ENCODE measurements at regions of chr3 and their contacts with region 1.

Region 1: DNA sequence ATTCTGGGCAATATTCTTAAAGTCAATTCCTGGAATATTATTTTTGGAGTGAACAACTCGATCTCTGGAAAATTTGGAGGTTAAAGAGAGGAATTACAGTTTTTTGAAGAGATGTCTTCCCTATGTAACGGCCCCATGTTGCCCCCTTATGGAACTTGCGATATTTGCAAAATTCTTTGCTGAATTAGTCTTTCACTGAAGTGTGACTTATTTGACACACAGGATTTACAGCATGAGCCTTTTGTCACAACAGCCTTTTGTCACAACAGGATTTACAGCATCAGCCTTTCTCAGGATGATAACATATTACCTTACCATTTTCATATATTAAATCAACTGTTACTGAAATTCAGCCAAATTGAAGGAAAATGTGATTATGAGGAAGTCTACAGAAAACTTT is 37.8 kb upstream of the SPTSSB start:
- DNase-seq: peak in 7 of 9 donors; percentile 17 to 56 (median 55)
- ATAC-seq: peak; percentile 68
- H3K4me3 ChIP-seq: no peak overlapping the region
- H3K4me3 Mint-ChIP-seq: no peak overlapping the region
- H3K27ac ChIP-seq: no peak overlapping the region
- H3K27ac Mint-ChIP-seq: no peak overlapping the region
- H3K4me1 ChIP-seq: peaks cover 21 to 22% of the 10 kb centered on the region in 2 donors
- H3K4me1 Mint-ChIP-seq: peaks cover 8 to 34% (median 30%) of the 10 kb centered on the region in 7 donors
- H3K27me3 ChIP-seq: no peaks in the 10 kb centered on the region
- H3K27me3 Mint-ChIP-seq: peaks cover 0 to 66% (median 6%) of the 10 kb centered on the region in 5 donors

Region 2: GRCh38 chr3:160754855-160755747 is 654.0 kb before region 1 on chr3:
- CTCF ChIA-PET with region 1: no interaction called
- POLR2A ChIA-PET with region 1: no interaction called
- intact Hi-C with region 1: loop called in 1 of 2 experiments (anchors 5 kb)
- DNase-seq: peak; percentile 76 to 88 (median 85)
- ATAC-seq: peak; percentile 92
- H3K4me3 ChIP-seq: peak overlapping the region; percentile 73
- H3K4me3 Mint-ChIP-seq: peak overlapping the region; percentile 88 to 99 (median 96)
- H3K27ac ChIP-seq: peak overlapping the region; percentile 69
- H3K27ac Mint-ChIP-seq: peak overlapping the region; percentile 88 to 97 (median 94)
- H3K4me1 ChIP-seq: peaks cover 10 to 11% of the 10 kb centered on the region in 2 donors
- H3K4me1 Mint-ChIP-seq: peaks cover 27 to 36% (median 30%) of the 10 kb centered on the region in 7 donors
- H3K27me3 ChIP-seq: peaks cover 0 to 6% of the 10 kb centered on the region in 2 donors
- H3K27me3 Mint-ChIP-seq: peaks cover 5 to 41% (median 10%) of the 10 kb centered on the region in 5 donors

Region 3: GRCh38 chr3:161096771-161097355 is 312.2 kb before region 1 on chr3:
- CTCF ChIA-PET with region 1: interaction called, 3 read pairs
- POLR2A ChIA-PET with region 1: no interaction called
- intact Hi-C with region 1: loop called in 1 of 2 experiments (anchors 1 kb)
- DNase-seq: peak in 5 of 9 donors; percentile 8 to 34 (median 21)
- ATAC-seq: no peak
- H3K4me3 ChIP-seq: no peak overlapping the region
- H3K4me3 Mint-ChIP-seq: no peak overlapping the region
- H3K27ac ChIP-seq: no peak overlapping the region
- H3K27ac Mint-ChIP-seq: no peak overlapping the region
- H3K4me1 ChIP-seq: no peaks in the 10 kb centered on the region
- H3K4me1 Mint-ChIP-seq: peaks cover 0 to 2% (median 0%) of the 10 kb centered on the region in 7 donors
- H3K27me3 ChIP-seq: no peaks in the 10 kb centered on the region
- H3K27me3 Mint-ChIP-seq: peaks cover 0 to 8% (median 0%) of the 10 kb centered on the region in 5 donors

Region 4: GRCh38 chr3:161305095-161305991 is 103.7 kb before region 1 on chr3:
- CTCF ChIA-PET with region 1: interaction called, 11 read pairs
- POLR2A ChIA-PET with region 1: no interaction called
- intact Hi-C with region 1: loop called (anchors 1 kb)
- DNase-seq: peak in 5 of 9 donors; percentile 21 to 41 (median 25)
- ATAC-seq: peak; percentile 51
- H3K4me3 ChIP-seq: no peak overlapping the region
- H3K4me3 Mint-ChIP-seq: no peak overlapping the region
- H3K27ac ChIP-seq: no peak overlapping the region
- H3K27ac Mint-ChIP-seq: no peak overlapping the region
- H3K4me1 ChIP-seq: peaks cover 18 to 20% of the 10 kb centered on the region in 2 donors
- H3K4me1 Mint-ChIP-seq: peaks cover 4 to 49% (median 38%) of the 10 kb centered on the region in 7 donors
- H3K27me3 ChIP-seq: no peaks in the 10 kb centered on the region
- H3K27me3 Mint-ChIP-seq: peaks cover 0 to 70% (median 0%) of the 10 kb centered on the region in 5 donors

Region 5: GRCh38 chr3:161349529-161350278 is 59.4 kb before region 1 on chr3:
- CTCF ChIA-PET with region 1: no interaction called
- POLR2A ChIA-PET with region 1: no interaction called
- intact Hi-C with region 1: loop called in 1 of 2 experiments (anchors 2 kb)
- DNase-seq: peak in 5 of 9 donors; percentile 10 to 57 (median 23)
- ATAC-seq: peak; percentile 87
- H3K4me3 ChIP-seq: no peak overlapping the region
- H3K4me3 Mint-ChIP-seq: peak overlapping the region in 5 of 10 donors; percentile 2 to 40 (median 10)
- H3K27ac ChIP-seq: no peak overlapping the region
- H3K27ac Mint-ChIP-seq: peak overlapping the region in 5 of 9 donors; percentile 2 to 49 (median 16)
- H3K4me1 ChIP-seq: peaks cover 7 to 14% of the 10 kb centered on the region in 2 donors
- H3K4me1 Mint-ChIP-seq: peaks cover 6 to 22% (median 17%) of the 10 kb centered on the region in 7 donors
- H3K27me3 ChIP-seq: no peaks in the 10 kb centered on the region
- H3K27me3 Mint-ChIP-seq: peaks cover 0 to 55% (median 0%) of the 10 kb centered on the region in 5 donors

Region 6: DNA sequence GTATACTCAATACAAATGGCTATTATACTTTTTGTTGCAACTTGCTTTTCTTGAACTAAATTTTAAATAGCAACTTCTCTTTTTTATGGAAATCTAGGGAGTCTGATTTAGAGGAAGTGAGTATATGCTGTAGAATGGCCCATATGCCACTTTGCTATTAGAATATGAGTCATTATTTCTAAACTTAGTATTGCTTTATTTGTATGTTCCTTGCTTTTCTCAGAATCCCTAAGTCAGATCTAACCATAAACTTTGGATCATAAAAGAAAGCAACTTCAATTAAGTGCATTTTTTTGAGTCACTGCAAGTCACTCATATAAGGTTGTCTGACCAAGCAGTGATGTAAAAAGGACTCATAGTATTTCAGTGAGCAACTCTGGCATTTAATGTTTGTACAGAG is 20.2 kb before region 1 on chr3:
- CTCF ChIA-PET with region 1: no interaction called
- POLR2A ChIA-PET with region 1: no interaction called
- intact Hi-C with region 1: loop called in 1 of 2 experiments (anchors 2 kb)
- DNase-seq: no peak
- ATAC-seq: peak; percentile 67
- H3K4me3 ChIP-seq: no peak overlapping the region
- H3K4me3 Mint-ChIP-seq: no peak overlapping the region
- H3K27ac ChIP-seq: no peak overlapping the region
- H3K27ac Mint-ChIP-seq: no peak overlapping the region
- H3K4me1 ChIP-seq: peaks cover 6 to 17% of the 10 kb centered on the region in 2 donors
- H3K4me1 Mint-ChIP-seq: peaks cover 3 to 41% (median 34%) of the 10 kb centered on the region in 7 donors
- H3K27me3 ChIP-seq: peaks cover 0 to 4% of the 10 kb centered on the region in 2 donors
- H3K27me3 Mint-ChIP-seq: peaks cover 0 to 69% (median 17%) of the 10 kb centered on the region in 5 donors

Region 7: GRCh38 chr3:161423911-161424522 is 14.9 kb after region 1 on chr3:
- CTCF ChIA-PET with region 1: interaction called, 3 read pairs
- POLR2A ChIA-PET with region 1: no interaction called
- intact Hi-C with region 1: loop called in 1 of 2 experiments (anchors 1 kb)
- DNase-seq: peak in 6 of 9 donors; percentile 29 to 54 (median 48)
- ATAC-seq: peak; percentile 61
- H3K4me3 ChIP-seq: no peak overlapping the region
- H3K4me3 Mint-ChIP-seq: no peak overlapping the region
- H3K27ac ChIP-seq: no peak overlapping the region
- H3K27ac Mint-ChIP-seq: no peak overlapping the region
- H3K4me1 ChIP-seq: no peaks in the 10 kb centered on the region
- H3K4me1 Mint-ChIP-seq: peaks cover 0 to 6% (median 3%) of the 10 kb centered on the region in 7 donors
- H3K27me3 ChIP-seq: no peaks in the 10 kb centered on the region
- H3K27me3 Mint-ChIP-seq: peaks cover 0 to 10% (median 5%) of the 10 kb centered on the region in 5 donors

Region 8: GRCh38 chr3:162400697-162401096 is 991.6 kb after region 1 on chr3:
- CTCF ChIA-PET with region 1: no interaction called
- POLR2A ChIA-PET with region 1: no interaction called
- intact Hi-C with region 1: no loop called
- DNase-seq: no peak
- ATAC-seq: no peak
- H3K4me3 ChIP-seq: no peak overlapping the region
- H3K4me3 Mint-ChIP-seq: no peak overlapping the region
- H3K27ac ChIP-seq: no peak overlapping the region
- H3K27ac Mint-ChIP-seq: no peak overlapping the region
- H3K4me1 ChIP-seq: no peaks in the 10 kb centered on the region
- H3K4me1 Mint-ChIP-seq: no peaks in the 10 kb centered on the region
- H3K27me3 ChIP-seq: no peaks in the 10 kb centered on the region
- H3K27me3 Mint-ChIP-seq: no peaks in the 10 kb centered on the region

Region 9: DNA sequence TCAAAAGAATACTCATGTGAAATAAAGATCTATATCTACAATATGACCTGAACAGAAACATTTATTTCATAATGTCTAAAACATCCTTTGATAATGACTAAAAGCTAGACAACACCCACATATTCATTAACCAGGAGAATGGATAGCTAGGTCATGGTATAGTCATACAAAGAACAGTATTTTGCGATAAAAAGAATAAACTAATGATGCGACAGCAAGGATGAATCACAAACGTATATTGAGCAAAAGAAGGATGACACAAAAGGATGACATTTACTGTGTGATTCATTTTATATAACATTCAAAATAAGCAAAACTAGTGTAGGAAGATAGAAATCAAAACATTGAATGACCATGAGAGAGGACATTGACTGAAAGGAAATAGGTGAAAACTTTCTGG is 1320.6 kb after region 1 on chr3:
- CTCF ChIA-PET with region 1: no interaction called
- POLR2A ChIA-PET with region 1: no interaction called
- intact Hi-C with region 1: no loop called
- DNase-seq: no peak
- ATAC-seq: no peak
- H3K4me3 ChIP-seq: no peak overlapping the region
- H3K4me3 Mint-ChIP-seq: no peak overlapping the region
- H3K27ac ChIP-seq: no peak overlapping the region
- H3K27ac Mint-ChIP-seq: no peak overlapping the region
- H3K4me1 ChIP-seq: no peaks in the 10 kb centered on the region
- H3K4me1 Mint-ChIP-seq: no peaks in the 10 kb centered on the region
- H3K27me3 ChIP-seq: no peaks in the 10 kb centered on the region
- H3K27me3 Mint-ChIP-seq: no peaks in the 10 kb centered on the region